ENCODE measurements at regions of chr14 and their contacts with region 1.

Region 1: GRCh38 chr14:24806061-24806678 is 172.2 kb upstream of the GZMB start:
- DNase-seq: peak; percentile 16
- ATAC-seq: peak; percentile 89
- H3K4me3 ChIP-seq: no peak overlapping the region
- H3K27ac ChIP-seq: no peak overlapping the region
- H3K4me1 ChIP-seq: no peaks in the 10 kb centered on the region
- H3K27me3 ChIP-seq: no peaks in the 10 kb centered on the region
- CTCF ChIP-seq: peak; percentile 79 to 92 (median 82)
- EP300 ChIP-seq: no peak
- POLR2A ChIP-seq: no peak
- RAD21 ChIP-seq: peak; percentile 75

Region 2: DNA sequence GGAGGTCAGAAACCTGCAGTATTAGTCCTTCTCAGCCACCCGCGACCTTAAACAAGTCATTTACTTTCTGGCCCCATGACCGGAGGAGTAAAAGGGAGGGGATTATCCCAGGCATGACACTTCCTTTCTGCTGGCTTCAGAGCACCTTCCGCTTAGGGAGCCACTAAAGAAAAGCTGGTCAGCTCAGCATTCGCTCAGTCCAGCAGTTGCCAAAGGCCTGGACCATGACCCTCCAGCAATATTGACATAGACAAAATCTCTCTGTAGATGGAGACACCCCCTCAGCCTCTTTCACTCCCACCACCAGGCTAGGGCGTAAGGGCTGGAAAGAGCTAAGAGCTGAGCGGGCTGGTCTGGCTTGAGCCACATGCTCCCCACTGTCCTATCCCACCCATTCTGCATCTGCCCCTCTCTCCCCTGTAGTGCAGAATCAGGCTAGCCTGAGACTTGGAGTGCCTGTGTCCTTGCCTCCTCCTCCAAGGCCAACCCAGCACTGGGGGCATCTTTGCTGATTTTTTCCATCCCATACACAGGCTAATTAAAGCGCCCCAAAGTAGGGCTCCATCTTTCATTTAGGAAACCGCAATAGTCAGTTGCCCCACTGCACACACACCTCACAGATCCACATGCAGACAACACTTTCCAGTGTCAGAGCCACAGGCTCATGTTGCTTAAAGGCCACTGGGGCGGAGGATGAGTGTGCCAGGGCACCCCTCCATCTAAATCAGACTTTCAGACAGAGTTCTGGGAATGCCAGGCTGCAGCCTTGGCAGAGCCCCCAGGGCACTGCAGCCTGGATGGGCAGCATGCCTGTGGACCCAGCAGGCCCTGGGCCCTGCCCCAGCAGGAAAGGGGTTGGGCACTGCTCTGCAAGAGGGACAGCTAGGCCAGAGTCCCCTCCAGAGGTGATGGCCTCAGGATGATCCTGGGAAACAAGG is 738.8 kb before region 1 on chr14:
- CTCF ChIA-PET with region 1: no interaction called
- POLR2A ChIA-PET with region 1: no interaction called
- RAD21 ChIA-PET with region 1: no interaction called
- SMC1A ChIA-PET with region 1: no interaction called
- in situ Hi-C with region 1: no loop called
- intact Hi-C with region 1: no loop called
- DNase-seq: no peak
- ATAC-seq: no peak; the same call in 2 of the 3 replicates
- H3K4me3 ChIP-seq: no peak overlapping the region
- H3K27ac ChIP-seq: no peak overlapping the region
- H3K4me1 ChIP-seq: no peaks in the 10 kb centered on the region
- H3K27me3 ChIP-seq: peaks cover 0 to 2% of the 10 kb centered on the region in 2 experiments; a peak in 3 of 4 replicates
- CTCF ChIP-seq: no peak
- EP300 ChIP-seq: no peak
- POLR2A ChIP-seq: no peak
- RAD21 ChIP-seq: no peak

Region 3: GRCh38 chr14:24690492-24690891 is 115.7 kb before region 1 on chr14:
- CTCF ChIA-PET with region 1: interaction called, 28 read pairs
- POLR2A ChIA-PET with region 1: no interaction called
- RAD21 ChIA-PET with region 1: interaction called, 6 read pairs
- SMC1A ChIA-PET with region 1: interaction called, 18 read pairs
- in situ Hi-C with region 1: no loop called
- intact Hi-C with region 1: no loop called
- DNase-seq: no peak
- ATAC-seq: peak; percentile 67
- H3K4me3 ChIP-seq: no peak overlapping the region
- H3K27ac ChIP-seq: no peak overlapping the region
- H3K4me1 ChIP-seq: peaks cover 18% of the 10 kb centered on the region
- H3K27me3 ChIP-seq: no peaks in the 10 kb centered on the region
- CTCF ChIP-seq: peak; percentile 30 to 37 (median 36); a peak in 5 of 6 replicates
- EP300 ChIP-seq: no peak
- POLR2A ChIP-seq: no peak
- RAD21 ChIP-seq: peak; percentile 58

Region 4: GRCh38 chr14:24829862-24830261 is 23.7 kb after region 1 on chr14:
- CTCF ChIA-PET with region 1: interaction called, 9 read pairs
- POLR2A ChIA-PET with region 1: no interaction called
- RAD21 ChIA-PET with region 1: no interaction called
- SMC1A ChIA-PET with region 1: interaction called, 27 read pairs
- in situ Hi-C with region 1: no loop called
- intact Hi-C with region 1: no loop called
- DNase-seq: no peak
- ATAC-seq: peak; percentile 89
- H3K4me3 ChIP-seq: no peak overlapping the region
- H3K27ac ChIP-seq: no peak overlapping the region
- H3K4me1 ChIP-seq: no peaks in the 10 kb centered on the region
- H3K27me3 ChIP-seq: no peaks in the 10 kb centered on the region
- CTCF ChIP-seq: no peak
- EP300 ChIP-seq: no peak
- POLR2A ChIP-seq: no peak
- RAD21 ChIP-seq: no peak

Region 5: GRCh38 chr14:24928386-24928900 is 122.3 kb after region 1 on chr14:
- CTCF ChIA-PET with region 1: interaction called, 5 read pairs
- POLR2A ChIA-PET with region 1: no interaction called
- RAD21 ChIA-PET with region 1: interaction called, 13 read pairs
- SMC1A ChIA-PET with region 1: interaction called, 17 read pairs
- in situ Hi-C with region 1: no loop called
- intact Hi-C with region 1: no loop called
- DNase-seq: no peak
- ATAC-seq: no peak
- H3K4me3 ChIP-seq: no peak overlapping the region
- H3K27ac ChIP-seq: no peak overlapping the region
- H3K4me1 ChIP-seq: no peaks in the 10 kb centered on the region
- H3K27me3 ChIP-seq: no peaks in the 10 kb centered on the region
- CTCF ChIP-seq: no peak
- EP300 ChIP-seq: no peak
- POLR2A ChIP-seq: no peak
- RAD21 ChIP-seq: no peak

Region 6: GRCh38 chr14:25006961-25007795 is 201.0 kb after region 1 on chr14:
- CTCF ChIA-PET with region 1: interaction called, 11 read pairs
- POLR2A ChIA-PET with region 1: no interaction called
- RAD21 ChIA-PET with region 1: interaction called, 12 read pairs
- SMC1A ChIA-PET with region 1: interaction called, 10 read pairs
- in situ Hi-C with region 1: no loop called
- intact Hi-C with region 1: no loop called
- DNase-seq: no peak
- ATAC-seq: peak; percentile 70
- H3K4me3 ChIP-seq: no peak overlapping the region
- H3K27ac ChIP-seq: no peak overlapping the region
- H3K4me1 ChIP-seq: no peaks in the 10 kb centered on the region
- H3K27me3 ChIP-seq: no peaks in the 10 kb centered on the region
- CTCF ChIP-seq: no peak
- EP300 ChIP-seq: peak; percentile 56 to 84; a peak in 3 of 4 replicates
- POLR2A ChIP-seq: no peak
- RAD21 ChIP-seq: no peak

Region 7: DNA sequence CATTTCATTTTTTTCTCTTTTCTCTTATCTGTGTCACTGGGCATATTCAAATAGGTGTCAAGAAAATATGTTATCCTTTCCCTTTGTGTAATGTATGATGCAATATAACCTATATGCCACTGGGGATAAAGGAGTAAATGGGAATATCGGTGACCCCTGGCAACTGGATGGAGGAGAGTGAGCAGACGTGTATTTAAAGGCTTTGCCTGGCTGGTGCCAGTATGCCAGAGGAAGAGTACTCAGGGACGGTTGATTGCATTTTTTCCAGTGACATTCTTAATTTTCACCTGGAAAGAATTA is 255.8 kb after region 1 on chr14:
- CTCF ChIA-PET with region 1: interaction called, 17 read pairs
- POLR2A ChIA-PET with region 1: no interaction called
- RAD21 ChIA-PET with region 1: interaction called, 4 read pairs
- SMC1A ChIA-PET with region 1: interaction called, 13 read pairs
- in situ Hi-C with region 1: no loop called
- intact Hi-C with region 1: no loop called
- DNase-seq: no peak
- ATAC-seq: peak; percentile 73; the same call in 2 of the 3 replicates
- H3K4me3 ChIP-seq: no peak overlapping the region
- H3K27ac ChIP-seq: no peak overlapping the region
- H3K4me1 ChIP-seq: no peaks in the 10 kb centered on the region
- H3K27me3 ChIP-seq: no peaks in the 10 kb centered on the region
- CTCF ChIP-seq: no peak
- EP300 ChIP-seq: no peak
- POLR2A ChIP-seq: no peak
- RAD21 ChIP-seq: no peak

Region 8: GRCh38 chr14:25400607-25401206 is 594.5 kb after region 1 on chr14:
- CTCF ChIA-PET with region 1: interaction called, 10 read pairs
- POLR2A ChIA-PET with region 1: no interaction called
- RAD21 ChIA-PET with region 1: interaction called, 4 read pairs
- SMC1A ChIA-PET with region 1: no interaction called
- in situ Hi-C with region 1: no loop called
- intact Hi-C with region 1: no loop called
- DNase-seq: no peak
- ATAC-seq: peak; percentile 79
- H3K4me3 ChIP-seq: no peak overlapping the region
- H3K27ac ChIP-seq: no peak overlapping the region
- H3K4me1 ChIP-seq: no peaks in the 10 kb centered on the region
- H3K27me3 ChIP-seq: no peaks in the 10 kb centered on the region
- CTCF ChIP-seq: peak; percentile 57 to 66 (median 65)
- EP300 ChIP-seq: no peak
- POLR2A ChIP-seq: no peak
- RAD21 ChIP-seq: peak; percentile 38

Measured in GM12878 (cell line).